Activated CD4-positive, alpha-beta T cell treated with anti-CD3 and anti-CD28 coated beads for 36 hours (primary cell): ENCODE measurements at regions of chr5 and their contacts with region 1.

Region 1: GRCh38 chr5:148957591-148958202 is 105.2 kb downstream of the SH3TC2 start:
- DNase-seq: peak; percentile 68
- ATAC-seq: peak; percentile 57
- H3K4me3 Mint-ChIP-seq: no peak overlapping the region
- H3K27ac Mint-ChIP-seq: no peak overlapping the region
- H3K4me1 Mint-ChIP-seq: no peaks in the 10 kb centered on the region
- H3K27me3 Mint-ChIP-seq: no peaks in the 10 kb centered on the region

Region 2: GRCh38 chr5:147098233-147098790 is 1859.4 kb before region 1 on chr5:
- CTCF ChIA-PET with region 1: no interaction called
- POLR2A ChIA-PET with region 1: no interaction called
- intact Hi-C with region 1: loop called in 1 of 2 experiments (anchors 10 kb)
- DNase-seq: peak; percentile 37
- ATAC-seq: no peak
- H3K4me3 Mint-ChIP-seq: no peak overlapping the region
- H3K27ac Mint-ChIP-seq: no peak overlapping the region
- H3K4me1 Mint-ChIP-seq: no peaks in the 10 kb centered on the region
- H3K27me3 Mint-ChIP-seq: peaks cover 2% of the 10 kb centered on the region

Region 3: DNA sequence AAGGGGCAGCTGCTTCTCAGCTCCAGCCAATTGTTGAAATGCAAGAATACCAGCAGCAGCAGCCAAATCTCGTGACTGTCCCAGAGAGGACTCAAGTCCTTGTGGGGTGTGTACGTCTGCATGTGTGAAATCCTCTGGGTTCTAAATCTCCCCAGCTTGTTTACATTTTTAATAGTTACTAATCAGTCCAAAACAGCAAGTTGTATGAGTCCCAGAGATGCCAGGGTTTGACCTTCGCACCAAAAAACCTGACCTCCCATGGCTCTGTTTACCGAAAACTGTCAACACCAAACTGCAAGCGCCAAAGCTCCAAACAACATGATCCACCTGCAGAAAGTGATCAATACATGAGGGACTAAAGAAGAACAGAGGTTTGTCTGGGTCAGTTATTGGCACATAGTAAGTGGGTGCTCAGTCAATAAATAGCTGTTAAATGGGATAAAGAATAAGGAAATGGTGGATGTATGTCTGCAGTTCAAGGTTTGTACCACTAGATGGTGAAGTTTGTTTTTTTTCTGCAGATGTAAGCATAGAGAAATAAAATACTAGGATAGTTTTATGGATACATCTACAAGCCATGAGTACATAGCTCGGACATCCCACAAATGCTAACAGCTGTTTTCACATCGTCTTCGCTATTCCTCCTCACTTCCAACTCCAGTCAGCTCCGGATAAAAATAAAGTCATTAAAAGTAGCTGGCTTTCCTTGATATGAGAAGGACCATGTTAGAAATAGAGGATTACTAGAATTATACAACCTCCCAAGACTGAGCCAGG is 216.5 kb before region 1 on chr5:
- CTCF ChIA-PET with region 1: interaction called, 173 read pairs
- POLR2A ChIA-PET with region 1: no interaction called
- intact Hi-C with region 1: loop called (anchors 1 to 2 kb)
- DNase-seq: no peak
- ATAC-seq: no peak
- H3K4me3 Mint-ChIP-seq: no peak overlapping the region
- H3K27ac Mint-ChIP-seq: no peak overlapping the region
- H3K4me1 Mint-ChIP-seq: no peaks in the 10 kb centered on the region
- H3K27me3 Mint-ChIP-seq: peaks cover 13% of the 10 kb centered on the region

Region 4: GRCh38 chr5:148820461-148821395 is 137.0 kb before region 1 on chr5:
- CTCF ChIA-PET with region 1: interaction called, 7 read pairs
- POLR2A ChIA-PET with region 1: no interaction called
- intact Hi-C with region 1: loop called (anchors 1 to 10 kb)
- DNase-seq: peak; percentile 32
- ATAC-seq: peak; percentile 30
- H3K4me3 Mint-ChIP-seq: no peak overlapping the region
- H3K27ac Mint-ChIP-seq: no peak overlapping the region
- H3K4me1 Mint-ChIP-seq: peaks cover 3% of the 10 kb centered on the region
- H3K27me3 Mint-ChIP-seq: peaks cover 15% of the 10 kb centered on the region

Region 5: DNA sequence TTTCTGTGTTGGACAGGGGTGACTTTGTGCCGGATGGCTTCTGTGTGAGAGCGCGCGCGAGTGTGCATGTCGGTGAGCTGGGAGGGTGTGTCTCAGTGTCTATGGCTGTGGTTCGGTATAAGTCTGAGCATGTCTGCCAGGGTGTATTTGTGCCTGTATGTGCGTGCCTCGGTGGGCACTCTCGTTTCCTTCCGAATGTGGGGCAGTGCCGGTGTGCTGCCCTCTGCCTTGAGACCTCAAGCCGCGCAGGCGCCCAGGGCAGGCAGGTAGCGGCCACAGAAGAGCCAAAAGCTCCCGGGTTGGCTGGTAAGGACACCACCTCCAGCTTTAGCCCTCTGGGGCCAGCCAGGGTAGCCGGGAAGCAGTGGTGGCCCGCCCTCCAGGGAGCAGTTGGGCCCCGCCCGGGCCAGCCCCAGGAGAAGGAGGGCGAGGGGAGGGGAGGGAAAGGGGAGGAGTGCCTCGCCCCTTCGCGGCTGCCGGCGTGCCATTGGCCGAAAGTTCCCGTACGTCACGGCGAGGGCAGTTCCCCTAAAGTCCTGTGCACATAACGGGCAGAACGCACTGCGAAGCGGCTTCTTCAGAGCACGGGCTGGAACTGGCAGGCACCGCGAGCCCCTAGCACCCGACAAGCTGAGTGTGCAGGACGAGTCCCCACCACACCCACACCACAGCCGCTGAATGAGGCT is 131.5 kb before region 1 on chr5 and contains the start of gene ADRB2:
- CTCF ChIA-PET with region 1: interaction called, 7 read pairs
- POLR2A ChIA-PET with region 1: no interaction called
- intact Hi-C with region 1: loop called (anchors 1 to 10 kb)
- DNase-seq: peak; percentile 89
- ATAC-seq: peak; percentile 95
- H3K4me3 Mint-ChIP-seq: peak within 1 kb of the TSS; percentile 66
- H3K27ac Mint-ChIP-seq: peak within 1 kb of the TSS; percentile 3
- H3K4me1 Mint-ChIP-seq: peaks cover 22% of the 10 kb centered on the region
- H3K27me3 Mint-ChIP-seq: peaks cover 30% of the 10 kb centered on the region
- total RNA-seq, gene ADRB2: 0.09 TPM in 1 of 2 experiments, not detected in the other

Region 6: DNA sequence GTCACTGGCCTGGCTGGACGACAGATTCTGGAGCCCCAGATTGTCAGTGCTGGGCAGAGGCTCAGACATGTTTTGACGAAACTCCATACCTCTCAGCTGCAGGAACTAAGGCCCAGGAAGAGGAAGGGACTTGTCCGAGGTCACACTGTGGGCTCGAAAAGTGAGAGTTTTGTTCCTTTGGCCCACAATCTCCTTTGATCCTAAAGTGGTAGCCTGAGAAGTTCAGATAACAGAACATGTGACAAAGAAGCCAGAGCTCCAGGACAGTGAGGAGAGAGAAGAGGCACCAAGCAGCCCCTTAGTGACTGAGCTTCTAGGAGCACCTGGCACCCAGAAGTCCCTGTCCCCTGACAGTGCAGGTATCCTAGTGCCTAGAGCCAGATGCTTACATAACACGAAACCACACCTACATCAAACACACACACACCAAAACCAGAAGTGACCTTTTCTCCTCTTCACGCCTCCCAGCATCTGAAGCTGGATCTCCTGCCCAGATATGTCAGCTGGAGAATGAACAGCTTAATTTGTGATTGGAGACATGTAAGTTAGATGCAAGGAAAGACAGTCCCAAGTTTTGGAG is 42.4 kb before region 1 on chr5:
- CTCF ChIA-PET with region 1: interaction called, 10 read pairs
- POLR2A ChIA-PET with region 1: no interaction called
- intact Hi-C with region 1: no loop called
- DNase-seq: no peak
- ATAC-seq: no peak
- H3K4me3 Mint-ChIP-seq: no peak overlapping the region
- H3K27ac Mint-ChIP-seq: no peak overlapping the region
- H3K4me1 Mint-ChIP-seq: no peaks in the 10 kb centered on the region
- H3K27me3 Mint-ChIP-seq: peaks cover 6% of the 10 kb centered on the region

Region 7: DNA sequence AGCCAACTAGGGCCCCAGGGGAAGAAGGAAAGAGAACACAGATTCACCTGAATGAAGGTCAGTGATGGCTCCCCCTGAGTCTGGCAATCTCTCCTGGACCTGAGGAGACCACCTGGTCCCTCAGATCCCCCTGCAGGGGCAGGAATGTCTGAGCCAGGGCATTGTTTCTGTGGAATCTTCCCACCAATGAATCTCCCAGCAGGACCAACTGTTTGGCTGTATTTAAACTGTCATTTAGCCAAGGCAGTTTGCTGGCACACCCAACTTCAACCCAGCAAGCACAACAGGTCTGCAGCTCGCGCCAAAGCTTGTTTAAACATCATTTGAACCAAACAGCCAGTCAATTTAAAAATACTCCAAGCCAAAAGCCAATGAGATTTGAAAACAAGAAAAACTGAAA is 12.5 kb after region 1 on chr5:
- CTCF ChIA-PET with region 1: interaction called, 10 read pairs
- POLR2A ChIA-PET with region 1: no interaction called
- intact Hi-C with region 1: no loop called
- DNase-seq: no peak
- ATAC-seq: no peak
- H3K4me3 Mint-ChIP-seq: no peak overlapping the region
- H3K27ac Mint-ChIP-seq: no peak overlapping the region
- H3K4me1 Mint-ChIP-seq: no peaks in the 10 kb centered on the region
- H3K27me3 Mint-ChIP-seq: peaks cover 3% of the 10 kb centered on the region